Mammary epithelial cell (primary cell): ENCODE measurements at regions of chr14 and their contacts with region 1.

Region 1: DNA sequence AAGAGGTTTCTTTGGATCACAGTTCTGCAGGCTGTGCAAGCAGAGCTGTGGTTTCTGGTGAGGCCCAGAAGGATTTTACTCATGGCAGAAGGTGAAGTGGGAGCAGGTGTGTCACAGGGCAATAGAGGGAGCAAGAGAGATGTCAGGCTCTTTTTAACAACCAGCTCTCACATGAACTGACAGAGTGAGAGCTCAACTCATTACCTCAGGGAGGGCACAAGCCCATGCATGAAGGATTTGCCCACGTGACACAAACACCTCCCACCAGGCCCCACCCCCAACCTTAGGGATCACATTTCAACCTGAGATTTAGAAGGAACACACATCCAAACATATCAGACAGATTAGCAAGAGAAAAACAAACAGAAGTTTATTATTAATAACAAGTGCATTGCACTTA is 470.4 kb downstream of the GALC start:
- DNase-seq: peak; percentile 66
- H3K4me3 ChIP-seq: no peak overlapping the region
- H3K27ac ChIP-seq: no peak overlapping the region
- H3K4me1 ChIP-seq: no peaks in the 10 kb centered on the region
- H3K27me3 ChIP-seq: no peaks in the 10 kb centered on the region
- CTCF ChIP-seq: peak in 1 of 2 donors; percentile 49

Region 2: GRCh38 chr14:87443787-87444186 is 78.8 kb before region 1 on chr14:
- CTCF ChIA-PET with region 1: no interaction called
- dilution Hi-C with region 1: no loop called
- in situ Hi-C with region 1: no loop called
- intact Hi-C with region 1: no loop called
- DNase-seq: peak; percentile 28
- H3K4me3 ChIP-seq: no peak overlapping the region
- H3K27ac ChIP-seq: no peak overlapping the region
- H3K4me1 ChIP-seq: peaks cover 2% of the 10 kb centered on the region
- H3K27me3 ChIP-seq: no peaks in the 10 kb centered on the region
- CTCF ChIP-seq: no peak

Region 3: GRCh38 chr14:87508333-87508732 is 14.2 kb before region 1 on chr14:
- CTCF ChIA-PET with region 1: interaction called, 10 read pairs
- dilution Hi-C with region 1: no loop called
- in situ Hi-C with region 1: no loop called
- intact Hi-C with region 1: no loop called
- DNase-seq: peak; percentile 83
- H3K4me3 ChIP-seq: no peak overlapping the region
- H3K27ac ChIP-seq: no peak overlapping the region
- H3K4me1 ChIP-seq: no peaks in the 10 kb centered on the region
- H3K27me3 ChIP-seq: no peaks in the 10 kb centered on the region
- CTCF ChIP-seq: no peak